ENCODE measurements at regions of chr3 and their contacts with region 1.

Region 1: GRCh38 chr3:123449102-123449996 is 459 bp upstream of the ADCY5 start:
- DNase-seq: peak; percentile 58 to 86
- ATAC-seq: peak; percentile 69
- H3K4me3 ChIP-seq: peak overlapping the region; percentile 59 to 87
- H3K27ac ChIP-seq: peak overlapping the region; percentile 68 to 88
- H3K4me1 ChIP-seq: no peaks in the 10 kb centered on the region
- H3K27me3 ChIP-seq: no peaks in the 10 kb centered on the region

Region 2: GRCh38 chr3:123375014-123375940 is 74.1 kb before region 1 on chr3:
- intact Hi-C with region 1: loop called in 1 of 2 experiments (anchors 10 kb)
- DNase-seq: no peak
- ATAC-seq: no peak
- H3K4me3 ChIP-seq: no peak overlapping the region
- H3K27ac ChIP-seq: peak overlapping the region; percentile 29 to 48
- H3K4me1 ChIP-seq: peaks cover 1 to 9% of the 10 kb centered on the region in 2 donors
- H3K27me3 ChIP-seq: no peaks in the 10 kb centered on the region

Region 3: GRCh38 chr3:123406598-123406997 is 42.8 kb before region 1 on chr3:
- intact Hi-C with region 1: loop called in 1 of 2 experiments (anchors 5 kb)
- DNase-seq: peak; percentile 91 to 93
- ATAC-seq: peak; percentile 85
- H3K4me3 ChIP-seq: no peak overlapping the region
- H3K27ac ChIP-seq: peak overlapping the region; percentile 36 to 98
- H3K4me1 ChIP-seq: peaks cover 0 to 4% of the 10 kb centered on the region in 2 donors
- H3K27me3 ChIP-seq: no peaks in the 10 kb centered on the region

Region 4: DNA sequence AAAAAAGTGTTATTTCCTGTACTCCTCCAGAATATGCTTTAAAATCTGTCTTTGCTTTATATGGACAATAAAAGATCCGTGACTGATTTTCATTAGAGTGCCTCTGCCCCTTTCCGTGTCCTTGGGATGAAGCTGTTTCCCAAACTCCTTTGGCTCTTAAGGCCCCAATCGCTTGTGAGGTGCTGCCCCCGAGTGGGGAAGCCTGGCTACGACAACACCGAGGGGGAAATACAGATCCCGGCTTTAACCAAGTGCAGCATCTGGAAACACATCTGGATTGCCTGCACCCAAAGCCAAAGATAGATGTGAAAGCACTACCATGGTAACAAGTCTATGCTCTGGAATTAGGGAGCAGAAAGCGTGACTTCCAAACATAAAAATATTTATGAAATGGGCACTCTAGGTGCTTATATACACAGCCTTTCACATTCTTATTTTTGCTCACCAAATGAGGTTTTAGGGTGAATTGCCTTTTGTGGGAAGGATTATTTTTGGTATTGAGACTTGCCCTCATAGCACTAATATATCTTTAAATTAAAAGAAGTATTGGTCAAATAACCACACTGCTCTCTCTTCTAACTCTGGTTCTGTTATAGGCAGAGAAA is 40.2 kb after region 1 on chr3:
- intact Hi-C with region 1: loop called in 1 of 2 experiments (anchors 2 kb)
- DNase-seq: peak; percentile 75 to 88
- ATAC-seq: peak; percentile 91
- H3K4me3 ChIP-seq: no peak overlapping the region
- H3K27ac ChIP-seq: peak overlapping the region in 1 of 2 donors; percentile 86
- H3K4me1 ChIP-seq: peaks cover 0 to 2% of the 10 kb centered on the region in 2 donors
- H3K27me3 ChIP-seq: no peaks in the 10 kb centered on the region

Region 5: GRCh38 chr3:123884203-123884831 is 435.0 kb after region 1 on chr3 and contains the start of gene MYLK:
- intact Hi-C with region 1: no loop called
- DNase-seq: peak; percentile 90 to 95
- ATAC-seq: peak; percentile 82
- H3K4me3 ChIP-seq: peak within 1 kb of the TSS; percentile 74 to 90
- H3K27ac ChIP-seq: peak within 1 kb of the TSS; percentile 61 to 68
- H3K4me1 ChIP-seq: peaks cover 0 to 1% of the 10 kb centered on the region in 2 donors
- H3K27me3 ChIP-seq: no peaks in the 10 kb centered on the region
- total RNA-seq, gene MYLK: 484 to 786 TPM